Activated T-helper 2 cell treated with anti-CD3 and anti-CD28 coated beads, Interferon-gamma antibody, Interleukin-2, Interleukin-4, amounts not matched to agents 10 μg/mL and 5 μg/mL and 100 μg/mL, durations not matched to agents 14 hours and 24 hours and 36 hours (primary cell): ENCODE measurements at regions of chr15 and their contacts with region 1.

Region 1: DNA sequence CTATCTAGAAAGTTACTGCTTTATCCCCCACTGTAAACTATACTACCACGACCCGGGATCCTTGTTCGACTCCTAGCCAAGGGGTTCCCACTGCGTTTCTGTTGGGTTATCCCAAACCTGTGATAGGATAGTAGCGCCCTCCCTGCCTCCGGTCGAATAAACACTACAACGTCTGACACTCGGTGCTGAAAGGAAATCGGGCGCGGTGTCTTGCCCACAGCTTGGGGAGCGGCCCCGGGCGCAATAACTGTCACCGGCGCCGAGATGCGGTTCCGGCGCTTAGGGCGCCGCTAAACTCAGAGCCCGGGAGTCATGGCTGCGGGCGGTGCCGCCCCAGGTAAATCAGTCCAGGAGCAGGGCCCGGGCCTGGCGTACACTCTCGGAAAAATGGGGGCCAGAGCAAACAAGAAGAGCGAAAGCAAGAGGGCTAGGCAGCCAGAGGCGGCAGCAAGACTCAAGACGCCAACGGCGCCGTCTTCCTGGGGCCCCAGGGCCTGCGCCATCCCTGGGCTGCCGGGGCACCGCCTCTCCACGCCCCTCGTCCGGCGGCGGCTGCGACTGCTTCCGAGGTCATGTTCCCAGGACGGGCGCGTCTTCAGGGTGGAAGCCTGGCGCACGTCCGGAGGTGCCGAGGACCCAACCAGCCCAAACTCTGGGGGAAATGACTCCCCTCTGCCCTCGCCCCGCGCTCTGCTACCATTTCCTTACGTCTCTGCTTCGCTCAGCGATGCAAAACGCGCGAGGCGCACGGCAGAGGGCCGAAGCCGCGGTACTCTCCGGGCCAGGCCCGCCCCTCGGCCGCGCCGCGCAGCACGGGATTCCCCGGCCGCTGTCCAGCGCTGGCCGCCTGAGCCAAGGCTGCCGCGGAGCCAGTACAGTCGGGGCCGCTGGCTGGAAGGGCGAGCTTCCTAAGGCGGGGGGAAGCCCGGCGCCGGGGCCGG is at the start of gene DUT:
- DNase-seq: peak; percentile 82
- H3K4me3 Mint-ChIP-seq: peak within 1 kb of the TSS; percentile 99
- H3K27ac Mint-ChIP-seq: peak within 1 kb of the TSS; percentile 99
- H3K4me1 Mint-ChIP-seq: peaks cover 38% of the 10 kb centered on the region
- H3K27me3 Mint-ChIP-seq: no peaks in the 10 kb centered on the region
- total RNA-seq, gene DUT: 204 and 212 TPM in 2 replicates

Region 2: DNA sequence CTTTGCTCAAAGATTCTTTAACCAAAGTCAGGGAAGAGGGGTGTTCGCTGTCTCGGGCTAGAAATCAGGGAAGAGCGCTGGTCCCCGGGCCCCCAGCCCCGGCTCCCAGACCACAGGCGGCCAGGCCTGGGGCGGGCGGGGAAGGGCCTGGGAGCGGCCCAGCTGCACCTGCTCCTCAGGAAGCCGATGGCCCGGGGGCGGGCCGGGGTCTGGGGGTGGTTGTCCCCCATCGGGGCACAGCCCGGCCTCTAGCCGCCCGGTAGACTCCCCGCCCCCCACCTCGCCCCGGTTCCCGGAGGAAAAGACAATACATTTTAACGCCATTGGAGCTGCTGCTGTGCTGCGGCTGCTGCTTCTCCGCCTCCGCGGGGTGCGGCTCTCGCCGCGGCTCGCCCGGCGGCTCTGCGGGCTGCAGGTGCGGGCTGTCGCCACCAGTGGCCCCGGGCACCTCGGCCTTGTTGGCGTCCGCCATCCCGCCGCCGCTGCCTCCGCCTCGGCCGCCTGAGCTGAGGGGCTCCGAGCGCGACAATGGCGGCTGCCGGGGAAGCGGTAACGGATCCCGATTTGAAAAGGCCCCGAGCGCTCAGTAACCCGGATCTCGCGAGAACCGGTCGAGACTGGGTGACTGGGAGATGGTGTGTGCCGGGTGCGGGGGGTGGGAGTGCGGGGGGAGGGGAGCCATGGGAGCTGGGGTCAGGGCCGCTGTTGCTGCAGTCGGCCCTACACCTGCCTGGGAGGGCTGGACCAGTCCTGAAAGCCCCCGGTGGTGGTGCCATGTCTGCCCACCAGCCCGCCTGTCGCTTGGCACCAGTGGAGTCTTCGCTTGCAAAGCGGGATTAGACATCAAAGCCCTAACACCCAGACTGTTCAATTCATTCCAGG is 153.1 kb before region 1 on chr15 and contains the start of gene MYEF2:
- intact Hi-C with region 1: loop called (anchors 5 kb)
- DNase-seq: peak; percentile 73
- H3K4me3 Mint-ChIP-seq: peak within 1 kb of the TSS; percentile 90
- H3K27ac Mint-ChIP-seq: peak within 1 kb of the TSS; percentile 93
- H3K4me1 Mint-ChIP-seq: peaks cover 18% of the 10 kb centered on the region
- H3K27me3 Mint-ChIP-seq: peaks cover 17% of the 10 kb centered on the region
- total RNA-seq, gene MYEF2: 36.3 and 37.7 TPM in 2 replicates

Region 3: DNA sequence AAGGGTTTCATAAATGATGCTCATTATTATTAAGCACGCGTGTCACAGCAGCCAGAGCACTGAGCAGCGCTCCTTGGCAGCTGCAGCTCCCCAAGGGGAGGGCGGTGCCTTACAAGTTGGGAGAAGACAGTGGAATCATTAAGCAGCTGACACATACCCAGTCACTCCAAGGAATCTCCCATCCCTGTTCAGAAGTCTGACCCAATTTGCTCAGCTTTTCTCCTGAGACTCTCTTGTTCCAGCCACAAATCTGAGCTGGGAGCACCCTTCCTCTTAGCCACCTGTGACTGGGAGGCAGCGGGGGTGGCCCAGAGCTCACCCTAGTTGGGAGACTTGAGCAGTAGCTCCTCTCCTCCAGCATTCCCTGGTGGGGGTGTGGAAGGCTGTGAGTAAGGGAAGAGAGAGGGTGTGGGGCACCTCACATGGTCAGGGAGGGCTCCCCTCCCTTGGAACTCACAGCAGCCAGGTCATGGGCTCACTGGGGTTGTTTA is 64.4 kb after region 1 on chr15:
- intact Hi-C with region 1: no loop called
- DNase-seq: no peak
- H3K4me3 Mint-ChIP-seq: no peak overlapping the region
- H3K27ac Mint-ChIP-seq: no peak overlapping the region
- H3K4me1 Mint-ChIP-seq: no peaks in the 10 kb centered on the region
- H3K27me3 Mint-ChIP-seq: peaks cover under 1% of the 10 kb centered on the region

Region 4: GRCh38 chr15:48810414-48811317 is 479.5 kb after region 1 on chr15 and contains the start of gene CEP152:
- intact Hi-C with region 1: loop called (anchors 10 kb)
- DNase-seq: peak; percentile 99
- H3K4me3 Mint-ChIP-seq: peak within 1 kb of the TSS; percentile 97
- H3K27ac Mint-ChIP-seq: peak within 1 kb of the TSS; percentile 97
- H3K4me1 Mint-ChIP-seq: peaks cover 31% of the 10 kb centered on the region
- H3K27me3 Mint-ChIP-seq: peaks cover 11% of the 10 kb centered on the region
- total RNA-seq, gene CEP152: 26.2 and 29.2 TPM in 2 replicates

Region 5: GRCh38 chr15:49620658-49621368 is 1289.7 kb after region 1 on chr15 and contains the starts of genes DTWD1 and FAM227B:
- intact Hi-C with region 1: loop called (anchors 5 kb)
- DNase-seq: peak; percentile 93
- H3K4me3 Mint-ChIP-seq: peak within 1 kb of the TSS; percentile 90
- H3K27ac Mint-ChIP-seq: peak within 1 kb of the TSS; percentile 91
- H3K4me1 Mint-ChIP-seq: peaks cover 39% of the 10 kb centered on the region
- H3K27me3 Mint-ChIP-seq: no peaks in the 10 kb centered on the region
- total RNA-seq, gene DTWD1: 22.0 and 24.0 TPM in 2 replicates
- total RNA-seq, gene FAM227B: 2.7 and 3.1 TPM in 2 replicates